Uterus (tissue), 4 donors: ENCODE measurements at regions of chr2 and their contacts with region 1.

Region 1: GRCh38 chr2:12716282-12717190 is at the start of gene TRIB2:
- DNase-seq: peak; percentile 85 to 88
- H3K4me3 ChIP-seq: peak within 1 kb of the TSS; percentile 80 to 96
- H3K27ac ChIP-seq: peak within 1 kb of the TSS; percentile 87 to 96
- H3K4me1 ChIP-seq: peaks cover 0 to 3% of the 10 kb centered on the region in 2 donors
- H3K27me3 ChIP-seq: no peaks in the 10 kb centered on the region
- CTCF ChIP-seq: peak in 1 of 4 experiments; percentile 9
- POLR2A ChIP-seq: peak; percentile 36 to 71
- total RNA-seq, gene TRIB2: 23.8 to 83.6 (median 40.1) TPM

Region 2: DNA sequence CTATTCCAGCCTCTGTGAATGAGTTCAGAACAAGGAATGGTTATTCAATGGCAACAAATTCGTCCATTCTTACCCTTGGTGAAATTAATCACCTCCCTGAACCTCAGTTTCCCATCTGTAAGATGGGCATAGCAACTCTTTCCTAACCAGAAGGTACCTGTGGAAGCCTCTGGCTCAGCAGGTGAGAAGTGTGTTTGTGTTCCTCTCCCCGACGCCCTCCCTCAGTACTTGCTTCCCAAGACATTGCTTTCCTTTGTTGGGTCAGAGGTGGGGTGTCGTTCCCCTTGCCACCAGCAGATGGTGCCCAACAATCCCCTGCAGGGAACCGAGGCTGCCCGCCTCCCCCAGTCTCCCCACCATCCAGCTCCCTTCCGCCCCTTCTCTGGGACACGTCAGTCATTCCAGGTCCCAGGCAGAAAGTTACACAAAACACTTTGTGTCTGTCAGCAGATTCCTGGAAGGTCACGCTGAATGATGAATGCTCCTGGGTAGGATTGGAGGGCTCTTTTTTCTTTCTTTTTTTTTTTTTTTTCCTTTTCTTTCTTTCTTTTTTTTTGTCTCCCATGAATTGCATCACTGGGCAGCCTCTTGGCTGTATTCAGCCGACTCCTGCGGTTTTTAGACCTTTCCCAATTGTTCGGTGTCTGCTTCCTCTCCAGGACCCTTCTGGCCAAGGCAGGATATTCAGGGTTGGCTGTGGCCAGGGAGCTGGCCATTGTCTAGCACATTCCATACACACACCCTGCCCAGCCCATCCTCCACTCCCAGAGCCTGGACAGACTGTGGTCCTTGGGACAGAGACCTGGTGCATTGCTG is 852.8 kb before region 1 on chr2:
- intact Hi-C with region 1: loop called (anchors 10 kb)
- DNase-seq: peak; percentile 87 to 88
- H3K4me3 ChIP-seq: peak overlapping the region in 1 of 2 donors; percentile 1
- H3K27ac ChIP-seq: peak overlapping the region; percentile 63 to 66
- H3K4me1 ChIP-seq: no peaks in the 10 kb centered on the region
- H3K27me3 ChIP-seq: no peaks in the 10 kb centered on the region
- CTCF ChIP-seq: peak; percentile 84 to 97 (median 94)
- POLR2A ChIP-seq: no peak

Region 3: GRCh38 chr2:12456293-12457151 is 260.0 kb before region 1 on chr2:
- intact Hi-C with region 1: loop called (anchors 10 kb)
- DNase-seq: peak; percentile 89 to 98
- H3K4me3 ChIP-seq: no peak overlapping the region
- H3K27ac ChIP-seq: peak overlapping the region; percentile 48 to 83
- H3K4me1 ChIP-seq: peaks cover 0 to 5% of the 10 kb centered on the region in 2 donors
- H3K27me3 ChIP-seq: no peaks in the 10 kb centered on the region
- CTCF ChIP-seq: no peak
- POLR2A ChIP-seq: no peak